ENCODE measurements at regions of chr3 and their contacts with region 1.

Region 1: GRCh38 chr3:124014366-124014942 is 22.5 kb upstream of the ROPN1 start:
- DNase-seq: no peak
- ATAC-seq: no peak

Region 2: GRCh38 chr3:124281453-124282316 is 267.2 kb after region 1 on chr3:
- intact Hi-C with region 1: loop called in 1 of 2 experiments (anchors 10 kb)
- DNase-seq: peak in 1 of 2 donors; percentile 25
- ATAC-seq: peak; percentile 79

Region 3: GRCh38 chr3:124467980-124468902 is 453.8 kb after region 1 on chr3:
- intact Hi-C with region 1: loop called in 1 of 2 experiments (anchors 10 kb)
- DNase-seq: peak in 1 of 2 donors; percentile 47
- ATAC-seq: peak; percentile 93